Activated CD4-positive, alpha-beta T cell treated with anti-CD3 and anti-CD28 coated beads, Interleukin-2, amount 10 ng/mL, durations not matched to agents 7 days and 5 days (primary cell): ENCODE measurements at regions of chr1 and their contacts with region 1.

Region 1: DNA sequence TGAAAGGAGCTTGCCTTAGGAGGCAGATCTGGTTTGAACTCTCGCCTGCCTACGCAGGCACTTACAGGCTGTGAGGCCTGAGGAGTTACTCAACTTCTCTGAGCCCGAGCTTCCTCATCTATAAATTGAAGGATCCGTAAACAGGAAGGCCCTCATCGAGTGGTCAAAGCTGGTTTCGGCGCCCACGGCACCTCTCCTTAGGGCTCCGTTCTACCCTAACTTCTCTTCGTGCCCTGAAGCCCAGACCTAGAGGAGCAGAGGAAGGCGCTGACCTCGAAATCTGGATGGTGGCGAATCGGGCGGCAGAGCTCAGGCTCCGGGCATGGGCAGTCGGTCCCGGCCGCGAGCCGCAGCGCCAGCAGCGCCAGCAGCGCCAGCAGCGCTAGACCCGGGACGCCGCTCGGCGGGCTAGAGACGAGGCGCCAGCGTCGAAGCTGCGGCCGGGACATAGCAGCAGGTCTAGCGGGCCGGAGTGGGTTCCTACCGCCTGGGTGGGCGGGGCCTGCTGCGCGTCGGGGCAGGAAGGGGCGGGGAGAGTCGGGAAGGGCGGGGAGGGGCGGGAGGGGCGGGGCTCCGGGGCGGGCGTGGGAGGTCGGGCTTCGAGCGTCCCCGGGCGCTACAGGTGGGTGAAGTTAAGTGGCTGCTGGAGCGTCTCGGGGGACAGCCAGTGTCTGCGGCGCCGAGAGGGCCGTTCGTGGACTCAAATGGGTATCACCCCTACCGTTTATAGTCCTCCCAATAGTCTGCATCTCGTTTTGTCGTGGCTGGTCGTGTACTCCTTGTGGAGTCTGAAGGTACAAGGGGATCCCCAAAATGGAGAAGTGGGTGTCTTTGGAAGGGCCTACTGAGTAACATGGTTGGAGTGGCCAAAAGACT is at the start of gene CTBS:
- DNase-seq: peak; percentile 87
- H3K4me3 Mint-ChIP-seq: peak within 1 kb of the TSS; percentile 98
- H3K27ac Mint-ChIP-seq: peak within 1 kb of the TSS; percentile 100
- H3K4me1 Mint-ChIP-seq: peaks cover 39% of the 10 kb centered on the region
- H3K27me3 Mint-ChIP-seq: peaks cover 1% of the 10 kb centered on the region
- total RNA-seq, gene CTBS: 13.2 to 14.8 TPM

Region 2: GRCh38 chr1:84143796-84144565 is 430.2 kb before region 1 on chr1 and contains the start of gene PRKACB:
- CTCF ChIA-PET with region 1: no interaction called
- POLR2A ChIA-PET with region 1: interaction called, 10 read pairs
- DNase-seq: peak; percentile 55
- H3K4me3 Mint-ChIP-seq: peak within 1 kb of the TSS; percentile 97
- H3K27ac Mint-ChIP-seq: peak within 1 kb of the TSS; percentile 99
- H3K4me1 Mint-ChIP-seq: peaks cover 33% of the 10 kb centered on the region
- H3K27me3 Mint-ChIP-seq: no peaks in the 10 kb centered on the region
- total RNA-seq, gene PRKACB: 108 to 119 TPM

Region 3: GRCh38 chr1:84506002-84506728 is 68.0 kb before region 1 on chr1 and contains the starts of genes GNG5 and SPATA1:
- CTCF ChIA-PET with region 1: interaction called, 5 read pairs
- POLR2A ChIA-PET with region 1: interaction called, 19 read pairs
- DNase-seq: peak; percentile 98
- H3K4me3 Mint-ChIP-seq: peak within 1 kb of the TSS; percentile 99
- H3K27ac Mint-ChIP-seq: peak within 1 kb of the TSS; percentile 98
- H3K4me1 Mint-ChIP-seq: peaks cover 42% of the 10 kb centered on the region
- H3K27me3 Mint-ChIP-seq: no peaks in the 10 kb centered on the region
- total RNA-seq, gene GNG5: 90.1 to 113 TPM
- total RNA-seq, gene SPATA1: 1.7 to 2.3 TPM

Region 4: DNA sequence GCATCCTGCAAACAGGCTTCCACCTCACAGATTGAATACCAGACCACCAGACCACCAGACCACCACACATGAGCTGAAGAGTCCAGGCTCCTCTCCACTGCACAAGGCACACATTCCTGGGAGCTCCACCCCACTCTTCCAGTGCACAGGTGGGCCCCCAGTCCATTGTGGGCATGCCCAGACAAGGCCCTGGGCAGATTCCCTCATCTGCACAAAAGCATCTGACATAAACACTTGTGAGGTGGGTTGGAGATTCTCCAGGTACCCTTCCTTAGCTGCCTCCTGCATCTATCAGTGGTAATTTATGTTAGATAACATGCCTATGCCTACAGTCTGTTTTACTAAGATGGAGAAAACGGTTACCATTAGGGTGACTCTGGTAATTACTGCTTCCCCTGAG is 11.6 kb after region 1 on chr1:
- CTCF ChIA-PET with region 1: no interaction called
- POLR2A ChIA-PET with region 1: no interaction called
- DNase-seq: no peak
- H3K4me3 Mint-ChIP-seq: no peak overlapping the region
- H3K27ac Mint-ChIP-seq: no peak overlapping the region
- H3K4me1 Mint-ChIP-seq: no peaks in the 10 kb centered on the region
- H3K27me3 Mint-ChIP-seq: no peaks in the 10 kb centered on the region

Region 5: DNA sequence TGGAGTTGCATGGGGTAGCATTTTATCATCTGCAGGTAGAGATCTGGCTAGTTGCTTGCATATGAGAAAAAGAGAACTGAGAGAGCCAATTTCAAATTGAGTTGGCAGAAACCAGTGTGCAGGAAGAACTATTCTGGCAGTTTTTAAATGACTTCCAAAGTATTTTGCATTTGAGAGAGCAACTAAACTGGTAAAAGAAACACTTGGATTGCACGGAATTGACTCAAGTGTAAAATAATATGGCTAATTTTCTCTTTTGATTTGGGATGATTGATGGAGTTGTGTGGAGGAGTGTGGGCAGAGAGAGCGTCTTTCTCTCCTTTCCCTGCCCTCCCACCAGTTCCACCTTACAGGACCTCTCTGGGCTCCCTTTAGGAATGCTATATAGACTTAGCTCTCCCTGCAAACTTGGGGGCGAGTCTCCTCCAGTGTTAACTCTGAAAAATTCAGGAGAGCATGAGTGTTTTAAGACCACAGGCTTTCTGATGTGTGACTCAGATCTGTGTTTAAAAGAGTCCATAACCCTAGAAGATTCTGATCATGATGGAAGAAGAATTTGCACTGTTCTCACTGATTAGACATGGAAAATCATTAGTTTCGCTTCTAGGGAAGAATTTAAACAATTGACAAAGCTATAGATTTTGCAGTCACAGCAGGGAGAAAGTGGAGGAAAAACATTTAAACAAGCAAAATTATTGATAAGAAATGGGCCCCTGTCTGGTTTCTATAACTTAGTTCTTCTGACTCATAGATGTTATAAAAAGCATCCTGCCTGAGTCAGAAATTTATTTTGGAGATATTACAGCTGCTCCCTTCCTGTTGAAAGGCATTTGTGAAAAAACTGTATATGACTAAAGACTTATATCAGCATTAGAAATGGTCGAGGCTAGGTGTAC is 24.9 kb after region 1 on chr1:
- CTCF ChIA-PET with region 1: no interaction called
- POLR2A ChIA-PET with region 1: no interaction called
- DNase-seq: no peak
- H3K4me3 Mint-ChIP-seq: no peak overlapping the region
- H3K27ac Mint-ChIP-seq: peak overlapping the region; percentile 28
- H3K4me1 Mint-ChIP-seq: peaks cover 16% of the 10 kb centered on the region
- H3K27me3 Mint-ChIP-seq: peaks cover 3% of the 10 kb centered on the region

Region 6: DNA sequence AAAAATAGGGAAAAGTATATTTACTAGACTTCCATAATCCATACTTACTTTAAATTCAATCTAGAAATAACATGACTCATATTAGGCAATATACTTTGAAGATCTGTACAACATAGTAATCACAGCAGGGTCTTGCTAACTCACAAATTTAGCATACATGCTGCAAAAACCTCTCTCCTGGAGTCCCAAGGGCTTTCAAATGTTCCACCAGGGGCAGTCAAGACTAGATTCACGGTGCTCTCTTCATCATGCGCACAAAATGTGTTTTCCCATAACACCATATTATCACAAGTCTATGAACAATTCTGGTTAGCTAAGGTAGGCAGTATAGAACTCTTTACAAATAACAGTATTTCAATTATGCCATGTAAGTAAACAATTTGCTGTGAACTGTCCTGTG is 70.3 kb after region 1 on chr1:
- CTCF ChIA-PET with region 1: no interaction called
- POLR2A ChIA-PET with region 1: no interaction called
- DNase-seq: no peak
- H3K4me3 Mint-ChIP-seq: no peak overlapping the region
- H3K27ac Mint-ChIP-seq: no peak overlapping the region
- H3K4me1 Mint-ChIP-seq: no peaks in the 10 kb centered on the region
- H3K27me3 Mint-ChIP-seq: no peaks in the 10 kb centered on the region